ENCODE measurements at regions of chr9 and their contacts with region 1.

Region 1: GRCh38 chr9:91164724-91165520 is 196.8 kb downstream of the AUH start:
- DNase-seq: peak; percentile 95 to 96 (median 96)
- H3K4me3 ChIP-seq: peak overlapping the region in 1 of 3 experiments; percentile 28
- H3K4me3 Mint-ChIP-seq: peak overlapping the region; percentile 64 to 72
- H3K27ac ChIP-seq: peak overlapping the region; percentile 11 to 73
- H3K27ac Mint-ChIP-seq: peak overlapping the region; percentile 40 to 97 (median 83)
- H3K4me1 ChIP-seq: peaks cover 39 to 44% of the 10 kb centered on the region in 2 donors
- H3K4me1 Mint-ChIP-seq: peaks cover 41% of the 10 kb centered on the region
- H3K27me3 ChIP-seq: no peaks in the 10 kb centered on the region
- H3K27me3 Mint-ChIP-seq: peaks cover 0 to 5% (median 4%) of the 10 kb centered on the region in 3 donors
- CTCF ChIP-seq: no peak

Region 2: DNA sequence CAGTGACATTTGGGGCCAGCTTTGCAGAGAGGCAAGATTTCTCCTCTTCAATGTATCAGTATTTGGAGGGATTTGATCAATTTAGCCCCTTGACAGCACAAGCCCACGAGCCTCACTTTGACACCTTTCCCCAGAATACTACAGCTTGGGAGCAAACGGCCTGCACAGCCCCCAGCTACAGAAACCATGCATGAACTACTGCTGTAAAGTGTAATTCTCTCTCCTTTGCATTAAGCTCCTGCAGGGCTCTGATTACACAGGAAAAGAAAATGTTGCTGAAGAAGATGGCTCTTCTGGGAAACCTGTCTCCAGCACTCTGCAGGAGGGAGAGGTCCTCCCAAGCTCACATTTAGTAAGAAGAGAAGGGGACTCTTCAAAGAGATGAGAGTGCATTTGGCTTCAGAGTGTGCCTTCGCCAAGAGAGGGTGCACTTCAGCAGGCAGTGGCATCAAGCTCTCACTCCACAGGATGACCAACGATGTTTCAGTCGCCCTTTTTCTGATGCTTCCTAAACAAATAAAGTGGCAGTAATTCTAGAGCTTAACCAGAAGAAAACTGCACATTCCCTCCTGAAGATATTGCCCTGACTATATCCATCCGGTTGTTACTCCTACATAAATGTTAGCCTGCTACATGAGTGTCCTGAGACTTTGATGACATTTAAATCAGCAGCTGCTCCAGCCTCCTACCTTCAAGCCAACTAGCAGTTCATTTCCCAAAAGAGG is 75.4 kb before region 1 on chr9:
- intact Hi-C with region 1: loop called in 1 of 2 experiments (anchors 5 kb)
- DNase-seq: peak in 2 of 3 donors; percentile 8 to 29
- H3K4me3 ChIP-seq: no peak overlapping the region
- H3K4me3 Mint-ChIP-seq: no peak overlapping the region
- H3K27ac ChIP-seq: no peak overlapping the region
- H3K27ac Mint-ChIP-seq: peak overlapping the region in 1 of 7 donors; percentile 57
- H3K4me1 ChIP-seq: peaks cover 30 to 31% of the 10 kb centered on the region in 2 donors
- H3K4me1 Mint-ChIP-seq: peaks cover 32% of the 10 kb centered on the region
- H3K27me3 ChIP-seq: no peaks in the 10 kb centered on the region
- H3K27me3 Mint-ChIP-seq: no peaks in the 10 kb centered on the region
- CTCF ChIP-seq: peak; percentile 19

Region 3: GRCh38 chr9:91245431-91246313 is 80.8 kb after region 1 on chr9:
- intact Hi-C with region 1: no loop called
- DNase-seq: peak; percentile 8 to 22 (median 10)
- H3K4me3 ChIP-seq: no peak overlapping the region
- H3K4me3 Mint-ChIP-seq: no peak overlapping the region
- H3K27ac ChIP-seq: no peak overlapping the region
- H3K27ac Mint-ChIP-seq: peak overlapping the region in 6 of 7 donors; percentile 16 to 70 (median 60)
- H3K4me1 ChIP-seq: peaks cover 9 to 13% of the 10 kb centered on the region in 2 donors
- H3K4me1 Mint-ChIP-seq: peaks cover 15% of the 10 kb centered on the region
- H3K27me3 ChIP-seq: no peaks in the 10 kb centered on the region
- H3K27me3 Mint-ChIP-seq: peaks cover 0 to 3% (median 0%) of the 10 kb centered on the region in 3 donors
- CTCF ChIP-seq: no peak